Mammary epithelial cell (primary cell): ENCODE measurements at regions of chr7 and their contacts with region 1.

Region 1: DNA sequence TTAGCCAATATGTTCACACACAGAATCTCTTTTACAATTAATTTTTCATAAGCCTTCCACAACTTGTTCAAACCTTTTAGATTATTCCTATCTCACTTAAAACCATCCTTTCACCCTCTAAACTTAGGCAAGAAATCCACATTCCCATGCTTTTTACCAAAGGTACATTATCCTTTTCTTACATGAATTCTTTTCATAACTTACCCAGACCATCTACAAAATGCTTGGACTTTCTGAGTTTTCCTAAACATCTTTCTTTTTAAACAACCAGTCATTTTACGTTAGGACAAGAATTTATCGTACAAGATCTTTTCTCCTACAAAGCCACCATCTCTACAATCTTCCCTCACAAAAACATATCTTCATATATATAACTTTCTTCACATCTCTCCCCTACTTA is 18.8 kb upstream of the GARS1 start:
- DNase-seq: no peak
- H3K4me3 ChIP-seq: no peak overlapping the region
- H3K27ac ChIP-seq: no peak overlapping the region
- H3K4me1 ChIP-seq: no peaks in the 10 kb centered on the region
- H3K27me3 ChIP-seq: no peaks in the 10 kb centered on the region
- CTCF ChIP-seq: no peak

Region 2: DNA sequence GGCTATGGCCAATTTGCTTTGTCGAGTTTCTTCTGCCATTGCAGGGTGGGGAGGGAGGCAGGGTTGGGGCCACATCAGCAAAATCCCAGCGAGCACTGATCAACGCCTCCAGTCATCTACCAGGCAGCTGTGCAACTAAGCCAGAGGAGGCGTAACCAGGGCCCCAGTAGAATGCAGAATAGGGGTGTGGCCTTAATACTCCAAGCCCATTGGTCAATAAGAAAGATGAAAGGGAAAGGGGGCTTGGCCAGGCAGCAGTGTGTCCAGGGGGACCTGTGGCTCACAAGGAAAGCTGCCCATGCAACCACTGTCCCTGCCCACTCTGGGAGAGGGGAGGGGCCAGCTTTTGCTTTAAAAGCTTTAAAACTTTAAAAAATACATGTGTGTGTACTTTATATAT is 49.7 kb before region 1 on chr7:
- CTCF ChIA-PET with region 1: no interaction called
- dilution Hi-C with region 1: loop called (anchors 5 kb)
- in situ Hi-C with region 1: no loop called
- intact Hi-C with region 1: no loop called
- DNase-seq: no peak
- H3K4me3 ChIP-seq: no peak overlapping the region
- H3K27ac ChIP-seq: no peak overlapping the region
- H3K4me1 ChIP-seq: peaks cover 2% of the 10 kb centered on the region
- H3K27me3 ChIP-seq: no peaks in the 10 kb centered on the region
- CTCF ChIP-seq: no peak

Region 3: DNA sequence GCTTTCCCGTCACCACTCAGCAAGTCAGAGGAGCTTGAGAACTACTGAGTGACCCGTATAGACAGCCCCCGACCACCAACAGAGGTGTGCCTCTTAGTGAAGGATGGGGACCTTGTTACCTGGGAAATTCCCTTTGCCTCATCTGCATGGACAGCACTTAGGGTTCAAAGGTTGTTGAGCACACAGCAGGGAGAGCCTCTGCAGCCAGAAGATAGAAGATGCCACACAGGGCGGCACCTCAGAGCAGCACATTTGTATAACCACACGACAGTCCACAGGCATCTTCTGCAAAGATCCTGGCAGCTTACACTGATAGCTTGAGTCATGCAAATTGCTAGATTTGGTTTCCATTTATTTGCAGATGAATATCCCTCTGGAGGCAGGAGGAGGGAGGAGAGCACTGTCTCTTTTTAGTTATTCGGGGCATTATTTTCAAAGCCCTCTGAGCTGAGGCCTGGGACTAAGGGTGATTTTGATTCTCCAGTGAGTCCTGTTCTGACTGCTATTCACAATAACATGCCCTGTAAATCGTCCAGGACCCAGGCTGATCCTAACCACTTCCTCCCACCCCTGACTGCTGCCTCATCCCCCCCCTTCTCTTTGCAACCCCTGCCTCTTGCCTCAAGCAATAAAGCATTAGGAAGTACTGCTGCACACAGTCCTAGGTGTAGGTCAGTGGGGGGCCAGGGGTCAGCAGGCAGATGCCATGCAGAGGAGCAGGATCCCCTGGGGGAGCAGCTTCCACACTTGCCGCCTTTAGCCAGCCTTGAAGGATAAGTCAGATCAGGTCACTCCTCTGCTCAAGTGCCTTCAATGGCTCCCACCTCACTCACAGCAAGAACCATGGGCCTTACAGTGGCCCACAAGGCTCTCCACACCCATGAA is 151.4 kb after region 1 on chr7:
- CTCF ChIA-PET with region 1: no interaction called
- dilution Hi-C with region 1: no loop called
- in situ Hi-C with region 1: no loop called
- intact Hi-C with region 1: no loop called
- DNase-seq: no peak
- H3K4me3 ChIP-seq: no peak overlapping the region
- H3K27ac ChIP-seq: no peak overlapping the region
- H3K4me1 ChIP-seq: no peaks in the 10 kb centered on the region
- H3K27me3 ChIP-seq: peaks cover 3% of the 10 kb centered on the region
- CTCF ChIP-seq: no peak